Activated CD8-positive, alpha-beta T cell treated with anti-CD3 and anti-CD28 coated beads for 36 hours (primary cell): ENCODE measurements at regions of chr12 and their contacts with region 1.

Region 1: GRCh38 chr12:103908866-103909265 is 21.3 kb upstream of the HSP90B1 start:
- DNase-seq: no peak
- ATAC-seq: no peak
- H3K4me3 Mint-ChIP-seq: no peak overlapping the region
- H3K27ac Mint-ChIP-seq: no peak overlapping the region
- H3K4me1 Mint-ChIP-seq: peaks cover 49% of the 10 kb centered on the region
- H3K27me3 Mint-ChIP-seq: no peaks in the 10 kb centered on the region
- CTCF ChIP-seq: no peak

Region 2: GRCh38 chr12:103924761-103925641 is 16.1 kb after region 1 on chr12:
- CTCF ChIA-PET with region 1: interaction called, 14 read pairs
- POLR2A ChIA-PET with region 1: interaction called, 90 read pairs
- intact Hi-C with region 1: loop called (anchors 2 kb)
- DNase-seq: peak; percentile 85
- ATAC-seq: peak; percentile 35
- H3K4me3 Mint-ChIP-seq: peak overlapping the region; percentile 86
- H3K27ac Mint-ChIP-seq: peak overlapping the region; percentile 93
- H3K4me1 Mint-ChIP-seq: peaks cover 37% of the 10 kb centered on the region
- H3K27me3 Mint-ChIP-seq: peaks cover under 1% of the 10 kb centered on the region
- CTCF ChIP-seq: no peak

Region 3: GRCh38 chr12:103956516-103957027 is 47.7 kb after region 1 on chr12:
- CTCF ChIA-PET with region 1: no interaction called
- POLR2A ChIA-PET with region 1: interaction called, 11 read pairs
- intact Hi-C with region 1: no loop called
- DNase-seq: peak; percentile 27
- ATAC-seq: no peak
- H3K4me3 Mint-ChIP-seq: peak overlapping the region; percentile 93
- H3K27ac Mint-ChIP-seq: peak overlapping the region; percentile 95
- H3K4me1 Mint-ChIP-seq: peaks cover 41% of the 10 kb centered on the region
- H3K27me3 Mint-ChIP-seq: no peaks in the 10 kb centered on the region
- CTCF ChIP-seq: no peak

Region 4: DNA sequence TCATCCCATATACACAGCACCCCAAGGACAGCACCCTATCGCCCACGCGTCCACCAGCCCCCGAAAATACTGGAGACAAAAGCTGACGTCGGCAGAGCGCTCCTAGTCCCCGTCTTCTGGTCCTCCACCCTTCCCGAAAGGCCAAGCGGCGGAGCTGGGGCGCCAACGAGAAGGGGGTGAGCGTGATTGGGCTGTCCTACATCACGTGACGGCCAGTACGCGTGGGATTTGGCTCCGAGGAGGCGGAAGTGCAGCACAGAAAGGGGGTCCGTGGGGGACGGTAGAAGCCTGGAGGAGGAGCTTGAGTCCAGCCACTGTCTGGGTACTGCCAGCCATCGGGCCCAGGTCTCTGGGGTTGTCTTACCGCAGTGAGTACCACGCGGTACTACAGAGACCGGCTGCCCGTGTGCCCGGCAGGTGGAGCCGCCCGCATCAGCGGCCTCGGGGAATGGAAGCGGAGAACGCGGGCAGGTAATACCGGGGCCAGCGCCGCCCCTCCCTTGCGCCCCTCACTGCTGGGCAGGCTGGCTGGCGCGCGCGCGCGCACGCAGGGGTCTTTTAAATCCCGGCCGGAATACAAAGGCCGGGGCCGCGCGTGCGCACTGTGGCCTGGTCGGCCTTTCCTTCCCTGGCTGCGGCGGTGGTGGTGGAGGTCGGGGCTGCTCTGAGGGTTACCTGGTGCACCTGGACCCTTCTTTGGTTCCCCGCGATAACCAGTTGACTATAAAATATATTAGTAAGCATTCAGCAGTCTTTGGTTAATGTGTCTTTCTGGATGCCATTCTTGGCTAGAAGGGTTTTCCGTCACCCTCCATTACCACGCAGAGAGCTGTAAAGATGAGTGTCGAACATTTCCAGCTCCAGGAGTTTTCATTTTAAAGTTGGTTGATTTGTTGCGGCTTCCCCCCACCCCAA is 57.0 kb after region 1 on chr12 and contains the start of gene TDG:
- CTCF ChIA-PET with region 1: interaction called, 3 read pairs
- POLR2A ChIA-PET with region 1: interaction called, 15 read pairs
- intact Hi-C with region 1: no loop called
- DNase-seq: peak; percentile 99
- ATAC-seq: peak; percentile 94
- H3K4me3 Mint-ChIP-seq: peak within 1 kb of the TSS; percentile 90
- H3K27ac Mint-ChIP-seq: peak within 1 kb of the TSS; percentile 98
- H3K4me1 Mint-ChIP-seq: peaks cover 40% of the 10 kb centered on the region
- H3K27me3 Mint-ChIP-seq: no peaks in the 10 kb centered on the region
- CTCF ChIP-seq: no peak
- total RNA-seq, gene TDG: 37.4 to 37.5 TPM

Region 5: GRCh38 chr12:104314242-104314614 is 405.4 kb after region 1 on chr12:
- CTCF ChIA-PET with region 1: no interaction called
- POLR2A ChIA-PET with region 1: no interaction called
- intact Hi-C with region 1: no loop called
- DNase-seq: no peak
- ATAC-seq: no peak
- H3K4me3 Mint-ChIP-seq: no peak overlapping the region
- H3K27ac Mint-ChIP-seq: no peak overlapping the region
- H3K4me1 Mint-ChIP-seq: peaks cover 7% of the 10 kb centered on the region
- H3K27me3 Mint-ChIP-seq: no peaks in the 10 kb centered on the region
- CTCF ChIP-seq: no peak